PC-9 (cell line): ENCODE measurements at regions of chr7 and their contacts with region 1.

Region 1: DNA sequence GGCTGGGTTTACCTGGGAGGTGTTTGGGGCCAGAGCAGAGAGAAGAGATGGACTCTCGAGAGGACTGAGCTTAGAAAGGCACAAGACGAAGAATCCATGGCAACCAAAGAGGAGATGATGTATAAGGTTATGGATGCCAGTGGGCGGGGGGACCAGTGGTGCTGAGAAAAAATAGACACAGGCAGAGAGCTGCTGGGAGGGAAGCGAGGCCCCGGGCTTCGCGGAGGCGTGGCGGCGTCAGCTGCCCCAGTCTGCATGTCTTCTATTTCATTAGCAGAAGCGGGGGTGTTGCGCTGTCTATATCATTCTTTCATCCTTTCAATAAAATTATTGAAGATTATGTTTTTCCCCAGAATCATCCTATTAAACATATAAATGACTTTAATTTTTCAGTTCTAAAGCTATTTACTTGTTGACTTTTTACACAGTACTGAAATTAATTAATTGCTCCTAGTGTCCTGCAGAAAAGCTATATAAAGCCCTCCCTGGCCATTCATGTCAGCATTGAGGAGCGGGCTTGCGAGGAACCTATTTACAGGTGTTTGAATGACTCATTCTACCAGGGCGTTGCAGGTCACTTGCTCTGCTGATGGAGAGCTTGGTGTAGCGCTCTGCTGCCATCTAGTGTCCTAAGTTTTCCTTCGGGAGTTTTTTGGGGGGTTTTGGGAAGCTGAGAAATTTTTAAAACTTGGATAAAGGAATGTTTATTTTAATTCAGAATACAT is 42.9 kb upstream of the BHLHA15 start:
- DNase-seq: peak; percentile 74 to 79
- H3K4me3 ChIP-seq: no peak overlapping the region
- H3K27ac ChIP-seq: no peak overlapping the region
- H3K4me1 ChIP-seq: peaks cover 18% of the 10 kb centered on the region
- H3K27me3 ChIP-seq: no peaks in the 10 kb centered on the region
- CTCF ChIP-seq: peak; percentile 91

Region 2: GRCh38 chr7:97117372-97118188 is 1050.8 kb before region 1 on chr7 and contains the start of gene SDHAF3:
- CTCF ChIA-PET with region 1: no interaction called
- POLR2A ChIA-PET with region 1: no interaction called
- intact Hi-C with region 1: loop called (anchors 5 kb)
- DNase-seq: peak; percentile 89 to 98
- H3K4me3 ChIP-seq: peak within 1 kb of the TSS; percentile 82
- H3K27ac ChIP-seq: peak within 1 kb of the TSS; percentile 49
- H3K4me1 ChIP-seq: peaks cover 15% of the 10 kb centered on the region
- H3K27me3 ChIP-seq: no peaks in the 10 kb centered on the region
- CTCF ChIP-seq: peak; percentile 44; the same call in 1 of the 2 replicates
- total RNA-seq, gene SDHAF3: 23.7 and 27.4 TPM in 2 replicates

Region 3: GRCh38 chr7:97555857-97556421 is 612.4 kb before region 1 on chr7:
- CTCF ChIA-PET with region 1: no interaction called
- POLR2A ChIA-PET with region 1: no interaction called
- intact Hi-C with region 1: no loop called
- DNase-seq: no peak
- H3K4me3 ChIP-seq: no peak overlapping the region
- H3K27ac ChIP-seq: no peak overlapping the region
- H3K4me1 ChIP-seq: no peaks in the 10 kb centered on the region
- H3K27me3 ChIP-seq: peaks cover 21% of the 10 kb centered on the region
- CTCF ChIP-seq: no peak

Region 4: GRCh38 chr7:97872025-97872669 is 296.2 kb before region 1 on chr7 and contains the start of gene ASNS:
- CTCF ChIA-PET with region 1: no interaction called
- POLR2A ChIA-PET with region 1: no interaction called
- intact Hi-C with region 1: loop called (anchors 1 kb)
- DNase-seq: peak; percentile 86 to 97
- H3K4me3 ChIP-seq: peak within 1 kb of the TSS; percentile 85
- H3K27ac ChIP-seq: peak within 1 kb of the TSS; percentile 79
- H3K4me1 ChIP-seq: peaks cover 18% of the 10 kb centered on the region
- H3K27me3 ChIP-seq: no peaks in the 10 kb centered on the region
- CTCF ChIP-seq: no peak
- total RNA-seq, gene ASNS: 173 and 199 TPM in 2 replicates

Region 5: DNA sequence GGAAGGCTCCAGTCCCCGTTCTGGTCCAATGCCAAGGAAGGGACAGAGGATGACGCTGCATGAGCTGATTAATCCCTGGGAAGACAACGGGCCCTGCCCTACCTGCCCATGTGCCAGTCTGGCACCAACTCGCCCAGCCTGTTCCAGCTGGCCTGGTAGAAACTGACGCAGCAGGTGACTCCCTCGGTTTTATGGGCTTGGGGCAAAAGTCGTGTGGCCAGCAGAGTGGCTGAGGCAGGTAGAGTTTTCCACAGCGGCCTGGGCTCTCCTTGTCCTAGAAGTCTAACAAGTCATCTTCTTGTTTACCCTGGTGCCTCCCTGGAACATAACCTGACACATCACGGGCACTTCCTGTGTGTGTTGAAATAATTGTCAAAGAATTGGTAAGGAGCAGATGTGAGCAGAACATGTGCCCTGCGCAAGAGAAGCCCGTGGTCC is 82.0 kb before region 1 on chr7:
- CTCF ChIA-PET with region 1: no interaction called
- POLR2A ChIA-PET with region 1: no interaction called
- intact Hi-C with region 1: loop called (anchors 5 kb)
- DNase-seq: peak; percentile 95 to 98
- H3K4me3 ChIP-seq: peak overlapping the region; percentile 11; the same call in 1 of the 2 replicates
- H3K27ac ChIP-seq: peak overlapping the region; percentile 94
- H3K4me1 ChIP-seq: peaks cover 51% of the 10 kb centered on the region
- H3K27me3 ChIP-seq: no peaks in the 10 kb centered on the region
- CTCF ChIP-seq: no peak

Region 6: GRCh38 chr7:98240961-98241674 is 72.8 kb after region 1 on chr7:
- CTCF ChIA-PET with region 1: no interaction called
- POLR2A ChIA-PET with region 1: no interaction called
- intact Hi-C with region 1: loop called (anchors 2 kb)
- DNase-seq: peak in 1 of 2 experiments; percentile 44
- H3K4me3 ChIP-seq: no peak overlapping the region
- H3K27ac ChIP-seq: no peak overlapping the region
- H3K4me1 ChIP-seq: no peaks in the 10 kb centered on the region
- H3K27me3 ChIP-seq: no peaks in the 10 kb centered on the region
- CTCF ChIP-seq: peak; percentile 80